Psoas muscle (tissue), 8 donors: ENCODE measurements at regions of chr19 and their contacts with region 1.

Region 1: DNA sequence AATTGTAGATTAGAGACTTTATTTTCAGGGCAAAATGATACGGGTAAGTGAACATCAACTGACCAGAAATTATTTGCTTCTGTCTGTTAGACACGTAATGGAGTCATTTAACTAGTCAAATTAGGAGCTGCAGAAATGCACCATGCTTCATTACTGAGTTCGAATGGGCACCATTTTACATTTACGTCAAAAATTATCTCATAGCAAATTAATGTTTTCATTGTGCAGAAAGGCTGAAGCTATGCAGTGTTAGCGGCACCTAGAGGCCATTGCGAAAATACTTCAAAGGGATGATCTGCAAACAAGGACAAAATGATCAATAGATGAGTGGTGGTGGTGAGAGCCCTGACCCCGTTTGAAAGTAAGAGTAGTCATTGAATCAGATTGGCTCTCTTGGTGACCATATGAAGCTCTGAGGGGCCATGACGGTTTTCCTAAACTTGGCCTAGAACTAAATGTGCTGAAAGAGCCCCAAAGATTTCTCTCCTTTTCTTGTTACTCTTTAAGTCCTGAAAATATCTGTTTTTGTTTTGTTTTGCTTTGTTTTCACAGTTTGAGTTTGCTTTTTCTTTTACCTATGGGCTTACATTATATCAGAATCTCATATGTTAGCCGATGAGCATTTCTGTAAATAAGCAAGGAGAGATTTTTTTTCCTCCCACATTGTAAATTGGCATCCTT is 277.9 kb downstream of the ZNF536 start:
- DNase-seq: no peak
- ATAC-seq: no peak
- H3K4me3 ChIP-seq: no peak overlapping the region
- H3K27ac ChIP-seq: no peak overlapping the region
- H3K4me1 ChIP-seq: no peaks in the 10 kb centered on the region
- H3K27me3 ChIP-seq: peaks cover 0 to 25% (median 4%) of the 10 kb centered on the region in 3 donors
- CTCF ChIP-seq: peak; percentile 67

Region 2: DNA sequence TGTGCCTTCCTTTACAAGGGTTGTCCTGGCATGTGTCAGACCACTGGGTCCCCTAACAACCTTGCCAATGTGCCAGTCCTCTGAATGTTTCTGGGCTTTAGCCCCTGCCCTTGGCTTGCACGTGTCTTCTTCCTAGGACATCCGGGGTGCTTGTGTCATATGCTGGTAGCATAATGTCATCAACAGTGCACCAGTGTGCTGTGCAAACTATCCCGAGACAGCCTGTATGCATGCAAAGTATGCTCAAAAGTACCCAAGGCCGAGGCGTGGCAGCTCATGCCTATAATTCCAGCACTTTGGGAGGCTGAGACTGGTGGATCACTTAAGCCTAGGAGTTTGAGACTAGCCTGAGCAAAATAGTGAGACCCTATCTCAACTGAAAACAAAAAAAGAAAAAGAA is 914.3 kb before region 1 on chr19:
- intact Hi-C with region 1: loop called in 1 of 2 experiments (anchors 10 kb)
- DNase-seq: no peak
- ATAC-seq: no peak
- H3K4me3 ChIP-seq: no peak overlapping the region
- H3K27ac ChIP-seq: no peak overlapping the region
- H3K4me1 ChIP-seq: no peaks in the 10 kb centered on the region
- H3K27me3 ChIP-seq: no peaks in the 10 kb centered on the region
- CTCF ChIP-seq: no peak

Region 3: GRCh38 chr19:30222428-30222873 is 427.6 kb before region 1 on chr19:
- intact Hi-C with region 1: loop called in 1 of 2 experiments (anchors 5 kb)
- DNase-seq: no peak
- ATAC-seq: no peak
- H3K4me3 ChIP-seq: no peak overlapping the region
- H3K27ac ChIP-seq: no peak overlapping the region
- H3K4me1 ChIP-seq: peaks cover 13% of the 10 kb centered on the region
- H3K27me3 ChIP-seq: peaks cover 0 to 74% (median 26%) of the 10 kb centered on the region in 3 donors
- CTCF ChIP-seq: peak; percentile 42

Region 4: DNA sequence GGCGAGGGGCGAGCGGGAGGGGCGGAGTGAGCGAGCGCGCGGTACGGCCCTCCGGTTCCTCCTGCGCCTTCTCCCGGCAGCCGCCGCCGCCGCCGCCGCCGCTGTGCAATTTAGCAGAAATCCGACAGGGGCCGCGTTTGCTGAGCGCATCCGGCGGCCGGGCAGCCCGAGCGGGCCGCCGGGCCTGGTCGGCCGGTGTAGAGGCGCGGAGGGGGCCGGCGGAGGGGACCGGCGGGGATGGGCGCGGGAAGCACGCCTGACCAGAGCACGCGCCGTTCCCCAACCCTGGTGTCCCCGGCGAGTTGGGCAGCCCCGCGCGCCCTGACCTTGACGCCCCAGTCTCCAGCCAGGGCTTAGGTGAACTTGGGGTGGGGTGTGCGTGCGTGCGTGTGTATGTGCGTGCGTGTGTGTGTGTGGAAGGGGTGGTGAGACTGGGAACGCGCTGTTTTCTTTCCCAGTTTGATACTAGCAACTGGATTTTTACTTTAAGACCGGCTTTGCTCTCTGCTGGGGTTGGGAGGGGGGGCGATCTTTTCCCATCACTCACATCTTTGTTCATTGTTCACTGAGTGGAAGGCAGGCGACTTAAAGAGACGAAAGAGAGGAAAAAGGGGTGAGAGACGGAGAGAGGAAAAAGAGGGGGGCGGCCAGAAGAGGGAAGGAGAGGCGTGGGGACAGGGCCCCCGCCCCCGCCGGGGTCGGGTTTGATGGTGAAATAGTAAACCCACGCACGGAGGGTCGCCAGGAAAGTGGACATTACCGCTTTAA is 422.2 kb before region 1 on chr19:
- intact Hi-C with region 1: loop called (anchors 5 to 10 kb)
- DNase-seq: peak; percentile 56 to 72
- ATAC-seq: peak; percentile 68 to 80 (median 78)
- H3K4me3 ChIP-seq: peak overlapping the region; percentile 67
- H3K27ac ChIP-seq: no peak overlapping the region
- H3K4me1 ChIP-seq: peaks cover 17% of the 10 kb centered on the region
- H3K27me3 ChIP-seq: peaks cover 0 to 95% (median 24%) of the 10 kb centered on the region in 3 donors
- CTCF ChIP-seq: peak; percentile 57